ENCODE measurements at regions of chr12 and their contacts with region 1.

Region 1: DNA sequence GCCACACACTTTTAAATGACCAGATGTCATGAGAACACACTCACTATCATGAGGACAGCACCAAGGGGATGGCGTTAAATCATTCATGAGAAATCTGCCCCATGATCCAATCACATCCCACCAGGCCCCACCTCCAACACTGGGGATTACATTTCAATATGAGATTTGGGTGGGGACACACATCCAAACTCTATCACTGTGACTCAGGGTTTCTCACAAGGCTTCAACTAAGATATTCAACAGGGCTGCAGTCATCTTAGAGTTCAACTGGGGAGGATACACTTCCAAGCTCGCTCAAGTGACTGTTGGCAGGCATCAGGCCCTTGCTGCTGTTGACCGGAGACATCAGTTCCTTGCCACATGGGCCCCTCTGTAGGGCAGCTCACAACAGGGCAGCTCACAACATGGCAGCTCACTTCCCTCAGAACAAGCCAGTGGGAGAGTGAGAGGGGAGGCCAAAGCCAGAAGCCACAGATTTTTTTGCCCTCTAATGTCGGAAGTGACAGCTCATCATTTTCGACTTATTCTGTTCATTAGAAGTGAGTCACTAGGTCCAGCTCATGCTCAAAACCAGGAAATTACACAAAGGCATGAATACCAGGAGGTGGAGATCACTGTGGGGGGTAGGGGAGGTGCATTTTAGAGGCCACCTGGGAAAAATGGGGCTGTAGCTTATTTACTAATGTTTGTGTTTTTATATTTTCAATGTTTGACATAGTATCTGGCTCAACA is 50.8 kb upstream of the PTHLH start:
- DNase-seq: peak; percentile 93
- H3K4me3 Mint-ChIP-seq: no peak overlapping the region
- H3K27ac Mint-ChIP-seq: peak overlapping the region; percentile 91
- H3K4me1 Mint-ChIP-seq: peaks cover 26% of the 10 kb centered on the region
- H3K27me3 Mint-ChIP-seq: no peaks in the 10 kb centered on the region
- CTCF ChIP-seq: no peak

Region 2: GRCh38 chr12:27999521-27999920 is 23.8 kb before region 1 on chr12:
- CTCF ChIA-PET with region 1: interaction called, 3 read pairs
- POLR2A ChIA-PET with region 1: interaction called, 14 read pairs
- intact Hi-C with region 1: no loop called
- DNase-seq: peak; percentile 89
- H3K4me3 Mint-ChIP-seq: peak overlapping the region; percentile 23
- H3K27ac Mint-ChIP-seq: peak overlapping the region; percentile 80
- H3K4me1 Mint-ChIP-seq: peaks cover 20% of the 10 kb centered on the region
- H3K27me3 Mint-ChIP-seq: no peaks in the 10 kb centered on the region
- CTCF ChIP-seq: no peak

Region 3: GRCh38 chr12:28035500-28035899 is 12.2 kb after region 1 on chr12:
- CTCF ChIA-PET with region 1: interaction called, 3 read pairs
- POLR2A ChIA-PET with region 1: interaction called, 16 read pairs
- intact Hi-C with region 1: no loop called
- DNase-seq: peak; percentile 62
- H3K4me3 Mint-ChIP-seq: no peak overlapping the region
- H3K27ac Mint-ChIP-seq: no peak overlapping the region
- H3K4me1 Mint-ChIP-seq: peaks cover 13% of the 10 kb centered on the region
- H3K27me3 Mint-ChIP-seq: no peaks in the 10 kb centered on the region
- CTCF ChIP-seq: no peak

Region 4: DNA sequence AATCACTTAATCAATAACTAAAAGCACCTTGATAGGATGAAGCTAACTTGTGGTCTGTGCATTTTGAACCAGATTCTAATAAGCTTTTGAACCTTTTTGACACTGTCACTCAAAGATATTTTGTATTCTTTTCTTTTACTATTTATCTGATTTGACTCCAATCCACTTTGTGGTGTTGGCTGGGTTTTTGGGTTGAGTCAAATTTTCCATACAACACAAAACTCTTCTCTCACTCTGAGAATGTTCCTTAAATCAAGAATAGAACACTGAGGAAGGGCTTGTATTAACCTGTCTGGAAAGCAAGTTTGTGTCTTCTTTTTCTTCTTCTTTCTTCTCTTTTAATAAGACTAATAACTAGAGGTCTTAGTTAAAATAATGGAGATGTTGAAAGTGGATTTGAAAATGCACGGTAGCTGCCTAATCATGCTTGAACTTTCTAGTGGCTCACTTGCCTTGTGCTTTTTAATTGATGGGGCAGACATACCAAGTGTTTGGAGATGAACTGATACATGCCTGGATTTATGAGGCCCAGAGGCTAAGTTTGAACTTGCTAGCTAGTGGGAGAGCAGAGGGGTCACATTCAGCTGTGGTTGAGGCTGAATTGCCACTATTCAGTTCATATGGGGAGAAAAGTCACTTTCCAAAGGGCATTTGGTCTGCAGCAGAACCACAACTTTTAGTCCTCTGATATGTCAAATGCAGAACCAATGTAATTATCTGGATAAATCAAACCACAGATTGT is 42.7 kb after region 1 on chr12:
- CTCF ChIA-PET with region 1: no interaction called
- POLR2A ChIA-PET with region 1: no interaction called
- intact Hi-C with region 1: no loop called
- DNase-seq: no peak
- H3K4me3 Mint-ChIP-seq: no peak overlapping the region
- H3K27ac Mint-ChIP-seq: no peak overlapping the region
- H3K4me1 Mint-ChIP-seq: peaks cover 8% of the 10 kb centered on the region
- H3K27me3 Mint-ChIP-seq: no peaks in the 10 kb centered on the region
- CTCF ChIP-seq: no peak

Measured in MCF 10A (cell line).